Mammary epithelial cell (primary cell): ENCODE measurements at regions of chr6 and their contacts with region 1.

Region 1: GRCh38 chr6:137313928-137314855 is 95.0 kb upstream of the IFNGR1 start:
- DNase-seq: peak; percentile 30
- H3K4me3 ChIP-seq: no peak overlapping the region
- H3K27ac ChIP-seq: no peak overlapping the region
- H3K4me1 ChIP-seq: peaks cover 5% of the 10 kb centered on the region
- H3K27me3 ChIP-seq: no peaks in the 10 kb centered on the region
- CTCF ChIP-seq: peak; percentile 83

Region 2: GRCh38 chr6:137076277-137077068 is 237.7 kb before region 1 on chr6:
- CTCF ChIA-PET with region 1: interaction called, 4 read pairs
- dilution Hi-C with region 1: no loop called
- in situ Hi-C with region 1: loop called in 1 of 2 experiments (anchors 25 kb)
- intact Hi-C with region 1: loop called (anchors 1 kb)
- DNase-seq: peak; percentile 59
- H3K4me3 ChIP-seq: no peak overlapping the region
- H3K27ac ChIP-seq: no peak overlapping the region
- H3K4me1 ChIP-seq: no peaks in the 10 kb centered on the region
- H3K27me3 ChIP-seq: no peaks in the 10 kb centered on the region
- CTCF ChIP-seq: peak; percentile 92 to 94

Region 3: DNA sequence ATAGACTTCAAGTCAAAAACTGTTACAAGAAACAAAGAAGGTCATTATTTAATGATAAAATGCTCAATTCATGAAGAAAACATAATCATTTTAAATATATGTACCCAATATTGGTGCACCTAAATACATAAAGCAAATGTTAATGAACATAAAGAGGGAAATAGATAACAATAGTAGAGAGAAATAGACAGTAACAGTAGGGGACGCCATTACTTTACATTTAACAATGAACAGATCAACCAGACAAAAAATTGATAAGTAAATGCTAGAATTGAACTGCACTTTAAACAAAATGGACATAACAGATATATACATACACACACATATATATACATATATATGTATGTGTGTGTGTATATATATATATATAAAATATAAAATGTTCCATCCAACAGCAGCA is 178.1 kb before region 1 on chr6:
- CTCF ChIA-PET with region 1: no interaction called
- dilution Hi-C with region 1: no loop called
- in situ Hi-C with region 1: no loop called
- intact Hi-C with region 1: loop called (anchors 1 kb)
- DNase-seq: no peak
- H3K4me3 ChIP-seq: no peak overlapping the region
- H3K27ac ChIP-seq: no peak overlapping the region
- H3K4me1 ChIP-seq: no peaks in the 10 kb centered on the region
- H3K27me3 ChIP-seq: peaks cover 2% of the 10 kb centered on the region
- CTCF ChIP-seq: peak; percentile 63 to 71

Region 4: DNA sequence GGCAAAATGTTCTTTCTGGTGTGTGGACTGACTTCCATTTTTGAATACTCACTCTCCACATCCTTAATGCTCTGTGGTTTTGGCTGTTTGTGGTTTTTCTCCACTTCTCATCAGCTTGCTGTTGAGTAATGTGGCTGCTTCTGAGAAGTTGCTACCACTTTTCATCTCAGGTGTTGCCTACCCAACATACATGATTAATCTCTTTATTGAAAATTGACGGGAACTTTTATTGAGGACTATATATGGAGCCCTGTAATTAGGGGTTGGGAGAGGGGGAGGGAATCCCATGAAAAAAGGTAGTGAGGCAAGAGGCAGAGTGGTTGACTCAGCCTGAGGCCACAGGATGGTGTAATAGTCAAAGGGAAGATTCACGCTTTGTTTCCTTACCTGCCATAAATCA is 158.4 kb before region 1 on chr6:
- CTCF ChIA-PET with region 1: no interaction called
- dilution Hi-C with region 1: no loop called
- in situ Hi-C with region 1: no loop called
- intact Hi-C with region 1: loop called (anchors 1 kb)
- DNase-seq: peak; percentile 93
- H3K4me3 ChIP-seq: no peak overlapping the region
- H3K27ac ChIP-seq: no peak overlapping the region
- H3K4me1 ChIP-seq: peaks cover 39% of the 10 kb centered on the region
- H3K27me3 ChIP-seq: no peaks in the 10 kb centered on the region
- CTCF ChIP-seq: no peak

Region 5: DNA sequence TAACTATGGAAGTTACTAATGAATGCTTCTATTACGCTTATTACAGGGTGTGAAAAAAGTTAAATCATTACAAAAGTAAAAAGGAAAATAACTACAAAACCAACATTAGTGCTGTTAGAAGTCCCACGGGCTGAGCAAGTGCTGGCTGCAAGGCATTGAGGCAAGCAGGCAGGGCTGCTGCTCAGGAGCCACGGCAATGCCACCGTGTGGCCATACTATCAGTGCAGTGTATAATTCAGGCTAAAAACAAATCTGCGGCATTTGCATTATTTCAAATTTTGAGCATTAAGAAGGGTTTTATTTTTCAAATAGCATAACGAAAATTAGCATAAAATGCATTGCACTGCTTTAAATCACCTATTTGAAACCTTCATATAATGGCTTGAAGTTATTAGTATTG is 112.1 kb before region 1 on chr6:
- CTCF ChIA-PET with region 1: no interaction called
- dilution Hi-C with region 1: no loop called
- in situ Hi-C with region 1: no loop called
- intact Hi-C with region 1: loop called (anchors 5 kb)
- DNase-seq: no peak
- H3K4me3 ChIP-seq: no peak overlapping the region
- H3K27ac ChIP-seq: no peak overlapping the region
- H3K4me1 ChIP-seq: no peaks in the 10 kb centered on the region
- H3K27me3 ChIP-seq: no peaks in the 10 kb centered on the region
- CTCF ChIP-seq: peak; percentile 67 to 81

Region 6: DNA sequence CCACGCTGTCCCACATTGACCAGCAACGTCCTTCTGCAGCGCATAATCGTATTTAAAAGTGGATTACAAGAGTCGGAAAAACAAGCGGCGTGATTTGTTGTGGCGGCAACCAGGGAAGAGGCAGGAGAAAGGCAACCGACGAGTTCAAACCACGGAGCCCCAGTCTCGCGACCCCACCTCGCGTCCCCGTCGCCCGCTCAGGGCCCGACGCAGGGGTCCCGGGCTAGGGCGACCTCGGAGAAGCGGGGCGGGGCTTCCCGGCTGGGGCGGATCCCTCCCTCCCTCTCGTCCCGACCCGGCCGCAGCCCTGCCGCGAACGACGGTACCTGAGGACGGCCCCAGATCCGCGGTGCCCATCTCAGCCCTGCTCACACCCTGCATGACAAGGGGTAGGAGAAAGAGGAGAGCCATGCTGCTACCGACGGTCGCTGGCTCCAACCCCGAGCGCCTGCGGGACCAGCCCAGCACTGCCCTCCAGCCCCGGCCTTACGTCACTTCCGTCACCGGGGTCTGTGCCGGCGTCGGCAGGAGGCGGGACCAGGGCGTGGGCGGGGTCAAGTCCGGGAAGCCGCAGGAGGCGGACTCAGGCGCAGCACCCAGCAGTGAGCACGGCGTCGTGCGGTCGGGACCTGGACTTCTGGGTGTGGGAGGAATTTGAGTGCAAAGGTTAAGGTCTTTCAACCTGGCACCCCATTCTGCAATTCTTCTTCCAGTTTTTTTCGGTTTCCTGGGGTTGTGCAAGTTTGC is 95.1 kb before region 1 on chr6 and contains the start of gene IFNGR1:
- CTCF ChIA-PET with region 1: no interaction called
- dilution Hi-C with region 1: no loop called
- in situ Hi-C with region 1: no loop called
- intact Hi-C with region 1: loop called (anchors 5 kb)
- DNase-seq: peak; percentile 90
- H3K4me3 ChIP-seq: peak within 1 kb of the TSS; percentile 78 to 98 (median 89)
- H3K27ac ChIP-seq: peak within 1 kb of the TSS; percentile 98
- H3K4me1 ChIP-seq: peaks cover 44% of the 10 kb centered on the region
- H3K27me3 ChIP-seq: no peaks in the 10 kb centered on the region
- CTCF ChIP-seq: no peak
- total RNA-seq, gene IFNGR1: 54.7 to 137 TPM

Region 7: DNA sequence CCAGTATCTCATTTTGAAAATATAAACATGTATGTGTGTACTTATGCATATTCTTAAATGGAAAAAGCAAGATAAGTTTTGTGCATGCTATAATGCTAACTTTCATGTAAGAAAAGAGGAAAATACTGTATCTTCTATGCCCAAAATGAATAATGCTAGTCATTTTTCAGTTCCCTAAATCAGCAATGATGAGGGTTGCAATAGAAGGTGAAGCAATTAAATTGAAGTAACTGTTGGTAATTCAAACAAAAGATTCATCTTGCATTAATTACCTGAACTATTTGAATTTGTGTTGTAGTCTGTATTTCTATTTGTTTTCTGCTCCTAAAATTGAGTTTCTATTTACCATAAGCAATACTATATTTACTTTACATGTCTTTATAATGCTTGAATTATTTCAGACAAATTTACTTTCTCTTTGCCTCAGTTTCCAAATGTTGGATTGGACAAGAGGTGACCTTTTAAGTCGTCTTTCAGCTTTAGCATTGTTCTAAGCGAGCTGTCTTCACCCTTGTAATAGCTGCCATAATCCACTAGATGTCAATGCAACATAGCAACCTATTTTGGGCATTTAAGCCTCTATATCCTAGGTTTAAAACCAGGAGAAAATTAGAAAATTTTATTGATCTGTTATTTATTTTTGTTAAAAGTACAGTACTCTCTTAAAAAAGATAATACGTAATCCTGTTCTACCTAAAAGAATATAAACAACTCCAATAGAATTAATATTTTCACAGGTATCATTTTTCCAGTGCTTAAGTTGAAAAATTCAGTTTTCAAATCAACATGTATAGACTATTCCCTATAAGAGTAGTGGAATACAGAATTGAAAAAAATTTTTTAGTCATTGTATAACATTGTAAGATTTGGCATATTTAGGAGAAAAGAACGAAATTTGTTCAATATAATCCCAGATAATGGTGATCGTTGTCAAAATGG is 42.7 kb before region 1 on chr6:
- CTCF ChIA-PET with region 1: interaction called, 12 read pairs
- dilution Hi-C with region 1: no loop called
- in situ Hi-C with region 1: no loop called
- intact Hi-C with region 1: loop called (anchors 1 kb)
- DNase-seq: peak; percentile 41
- H3K4me3 ChIP-seq: no peak overlapping the region
- H3K27ac ChIP-seq: no peak overlapping the region
- H3K4me1 ChIP-seq: no peaks in the 10 kb centered on the region
- H3K27me3 ChIP-seq: no peaks in the 10 kb centered on the region
- CTCF ChIP-seq: peak; percentile 92 to 98